PC-3 (cell line): ENCODE measurements at regions of chr5 and their contacts with region 1.

Region 1: DNA sequence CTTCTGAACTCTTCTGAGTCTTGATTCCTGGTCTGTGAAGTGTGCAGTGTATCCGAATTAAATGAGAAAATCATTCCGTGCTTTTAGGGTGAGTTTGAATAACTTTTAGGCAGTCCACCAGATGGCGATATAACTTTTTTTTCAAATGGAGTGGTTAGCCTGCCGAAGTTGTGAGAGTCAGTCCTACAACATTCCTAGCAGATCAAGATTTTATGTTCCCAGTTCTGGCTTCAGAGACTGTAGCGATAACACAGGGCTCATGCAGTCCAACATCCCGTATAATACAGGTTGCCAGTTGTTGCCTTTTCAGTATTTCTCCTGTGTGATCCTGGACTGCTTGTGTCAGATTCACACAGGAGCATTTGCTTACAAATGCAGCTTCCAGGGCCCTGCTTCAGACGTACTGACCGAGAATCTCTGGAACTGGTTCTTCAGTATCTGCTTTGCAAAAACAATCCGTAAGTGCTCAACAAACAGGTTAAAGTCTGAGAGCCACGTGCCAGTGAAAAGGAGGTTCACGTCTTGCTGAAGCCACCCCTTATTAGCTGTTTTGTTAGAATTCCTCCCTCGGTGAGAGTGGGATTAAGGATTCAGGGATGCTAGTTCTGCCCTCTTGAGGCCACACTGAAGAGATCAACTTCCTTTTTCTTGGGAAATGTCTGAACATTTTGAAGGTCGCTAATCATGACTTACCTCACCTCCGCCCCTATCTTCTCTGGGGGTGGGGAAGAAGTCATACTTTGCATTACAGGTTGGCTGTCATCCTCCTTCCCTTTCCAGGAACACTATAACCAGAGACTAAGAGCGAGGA is 22.8 kb downstream of the SMIM3 start:
- DNase-seq: peak; percentile 82
- ATAC-seq: peak; percentile 93
- H3K4me3 ChIP-seq: peak overlapping the region; percentile 62
- H3K27ac ChIP-seq: no peak overlapping the region
- H3K4me1 ChIP-seq: no peaks in the 10 kb centered on the region
- H3K27me3 ChIP-seq: no peaks in the 10 kb centered on the region
- CTCF ChIP-seq: peak; percentile 67

Region 2: DNA sequence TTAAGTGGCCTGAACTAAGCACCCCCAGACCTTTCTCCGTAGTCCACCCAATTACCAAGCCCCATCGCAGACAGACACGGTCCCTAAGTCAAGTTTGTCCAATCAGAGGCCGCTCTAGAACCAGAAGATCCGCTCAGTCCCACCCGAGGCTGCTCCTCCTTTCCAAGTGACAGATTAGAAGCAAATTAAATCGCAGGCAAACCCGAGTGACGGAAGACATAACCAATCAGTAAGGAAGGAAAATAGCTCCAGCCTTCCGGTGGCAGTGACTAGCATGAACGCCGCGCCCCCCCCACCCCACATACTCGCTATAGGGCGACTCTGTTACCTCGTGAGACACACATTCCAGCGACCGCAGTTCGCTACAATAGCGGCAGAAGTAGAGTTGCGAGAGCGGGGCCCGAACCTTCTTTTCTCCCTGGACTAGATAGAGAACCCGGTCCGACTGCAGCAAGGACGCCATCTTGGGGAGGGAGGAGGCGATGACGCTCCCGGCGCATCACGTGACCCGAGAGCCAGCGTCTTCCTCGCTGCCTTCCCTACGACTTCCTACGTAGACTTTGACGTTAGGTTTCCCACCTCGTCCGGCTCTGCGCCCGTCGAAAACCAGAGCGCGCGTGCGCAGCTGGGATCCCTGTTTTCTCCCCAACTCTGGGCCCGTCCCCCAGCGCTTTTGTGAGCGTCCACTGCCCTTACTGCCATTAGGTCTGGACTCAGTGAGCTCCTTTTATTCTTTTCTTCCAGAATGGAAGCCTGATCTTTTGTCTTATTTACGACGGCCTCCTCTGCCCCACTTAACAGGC is 42.6 kb before region 1 on chr5 and contains the start of gene DCTN4:
- CTCF ChIA-PET with region 1: no interaction called
- POLR2A ChIA-PET with region 1: no interaction called
- intact Hi-C with region 1: loop called (anchors 2 kb)
- DNase-seq: peak; percentile 97
- ATAC-seq: peak; percentile 94
- H3K4me3 ChIP-seq: peak within 1 kb of the TSS; percentile 84
- H3K27ac ChIP-seq: peak within 1 kb of the TSS; percentile 87
- H3K4me1 ChIP-seq: peaks cover 29% of the 10 kb centered on the region
- H3K27me3 ChIP-seq: no peaks in the 10 kb centered on the region
- CTCF ChIP-seq: no peak
- total RNA-seq, gene DCTN4: 40.5 and 45.0 TPM in 2 replicates

Region 3: GRCh38 chr5:150846654-150847333 is 45.5 kb after region 1 on chr5:
- CTCF ChIA-PET with region 1: interaction called, 16 read pairs
- POLR2A ChIA-PET with region 1: no interaction called
- intact Hi-C with region 1: loop called (anchors 1 kb)
- DNase-seq: peak; percentile 79
- ATAC-seq: peak; percentile 91
- H3K4me3 ChIP-seq: no peak overlapping the region
- H3K27ac ChIP-seq: no peak overlapping the region
- H3K4me1 ChIP-seq: no peaks in the 10 kb centered on the region
- H3K27me3 ChIP-seq: no peaks in the 10 kb centered on the region
- CTCF ChIP-seq: peak; percentile 87

Region 4: DNA sequence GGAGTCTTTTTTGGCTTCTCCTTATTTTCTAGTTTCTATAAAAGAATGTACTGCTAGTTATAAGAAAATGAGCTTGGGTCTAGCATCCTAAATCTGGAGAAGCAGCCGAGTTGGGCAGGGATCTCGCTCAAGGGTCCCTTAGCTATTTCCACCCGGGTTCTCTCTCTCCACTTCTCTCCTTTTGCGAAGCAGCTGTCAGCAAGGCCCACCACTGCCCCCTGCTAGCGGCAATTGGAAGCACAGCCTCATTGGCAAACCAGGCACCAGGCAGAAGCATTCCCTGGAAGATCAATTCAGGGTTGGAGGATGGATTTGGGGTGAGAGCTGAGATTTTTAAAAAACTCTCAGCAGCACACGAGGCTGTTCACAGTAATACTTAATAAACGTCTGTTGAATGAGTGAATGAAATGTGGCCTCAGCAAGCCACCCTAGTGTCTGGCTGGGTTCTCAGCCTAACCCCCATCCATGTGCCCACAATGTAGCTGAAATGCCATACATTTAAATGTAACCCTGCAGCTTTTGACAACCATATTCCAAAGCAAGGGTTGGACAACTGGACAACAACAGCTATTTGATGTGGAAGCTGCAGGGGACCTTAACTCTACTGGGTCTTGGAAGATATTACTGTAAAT is 314.1 kb after region 1 on chr5:
- CTCF ChIA-PET with region 1: interaction called, 3 read pairs
- POLR2A ChIA-PET with region 1: no interaction called
- intact Hi-C with region 1: loop called (anchors 1 kb)
- DNase-seq: peak; percentile 77
- ATAC-seq: peak; percentile 86
- H3K4me3 ChIP-seq: no peak overlapping the region
- H3K27ac ChIP-seq: no peak overlapping the region
- H3K4me1 ChIP-seq: no peaks in the 10 kb centered on the region
- H3K27me3 ChIP-seq: no peaks in the 10 kb centered on the region
- CTCF ChIP-seq: peak; percentile 97